ENCODE measurements at regions of chr4 and their contacts with region 1.

Region 1: GRCh38 chr4:138162259-138162658 is 79.9 kb downstream of the SLC7A11 start:
- DNase-seq: no peak
- H3K4me3 Mint-ChIP-seq: no peak overlapping the region
- H3K27ac Mint-ChIP-seq: no peak overlapping the region
- H3K4me1 Mint-ChIP-seq: peaks cover 10% of the 10 kb centered on the region
- H3K27me3 Mint-ChIP-seq: no peaks in the 10 kb centered on the region
- CTCF ChIP-seq: no peak

Region 2: DNA sequence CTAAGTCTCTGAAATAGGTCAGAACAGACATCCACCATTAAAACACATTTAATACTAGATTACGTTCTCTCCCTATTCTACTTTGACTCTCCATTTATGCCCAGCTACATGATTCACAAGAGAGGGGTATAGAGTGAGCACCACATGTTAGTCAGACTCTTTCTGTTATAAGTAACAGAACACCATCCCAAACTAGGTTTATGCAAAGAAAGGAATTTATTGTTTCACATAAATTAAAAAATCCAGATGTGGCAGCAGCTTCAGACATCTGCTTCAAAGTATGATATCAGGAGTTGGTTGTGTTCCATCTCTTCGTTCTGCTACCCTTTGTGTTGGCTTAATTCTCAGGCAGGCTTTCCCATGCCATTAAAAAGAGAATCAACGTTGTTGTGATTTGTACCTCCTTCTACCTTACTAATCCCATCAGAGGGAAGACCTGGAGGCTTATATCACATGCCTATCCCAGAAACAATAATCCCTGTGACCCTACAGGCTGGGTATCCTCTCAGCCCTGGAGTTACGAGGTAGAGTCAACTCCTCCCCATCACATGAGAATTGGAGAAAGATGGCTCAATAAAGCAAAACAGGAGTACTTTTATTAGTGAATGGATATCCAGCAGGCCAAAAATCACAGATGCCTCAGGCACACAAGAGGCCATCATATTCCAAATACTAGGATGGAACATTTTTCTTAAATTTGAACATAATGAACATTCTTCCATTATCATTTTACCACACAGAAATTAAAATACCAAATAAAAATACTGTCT is 83.3 kb before region 1 on chr4:
- CTCF ChIA-PET with region 1: no interaction called
- intact Hi-C with region 1: no loop called
- DNase-seq: no peak
- H3K4me3 Mint-ChIP-seq: no peak overlapping the region
- H3K27ac Mint-ChIP-seq: no peak overlapping the region
- H3K4me1 Mint-ChIP-seq: peaks cover 9% of the 10 kb centered on the region
- H3K27me3 Mint-ChIP-seq: no peaks in the 10 kb centered on the region
- CTCF ChIP-seq: no peak

Region 3: GRCh38 chr4:138114434-138114833 is 47.8 kb before region 1 on chr4:
- CTCF ChIA-PET with region 1: no interaction called
- intact Hi-C with region 1: loop called (anchors 5 kb)
- DNase-seq: no peak
- H3K4me3 Mint-ChIP-seq: peak overlapping the region; percentile 20
- H3K27ac Mint-ChIP-seq: peak overlapping the region; percentile 90
- H3K4me1 Mint-ChIP-seq: peaks cover 36% of the 10 kb centered on the region
- H3K27me3 Mint-ChIP-seq: no peaks in the 10 kb centered on the region
- CTCF ChIP-seq: no peak

Measured in Calu3 (cell line).